ENCODE measurements at regions of chr12 and their contacts with region 1.

Region 1: DNA sequence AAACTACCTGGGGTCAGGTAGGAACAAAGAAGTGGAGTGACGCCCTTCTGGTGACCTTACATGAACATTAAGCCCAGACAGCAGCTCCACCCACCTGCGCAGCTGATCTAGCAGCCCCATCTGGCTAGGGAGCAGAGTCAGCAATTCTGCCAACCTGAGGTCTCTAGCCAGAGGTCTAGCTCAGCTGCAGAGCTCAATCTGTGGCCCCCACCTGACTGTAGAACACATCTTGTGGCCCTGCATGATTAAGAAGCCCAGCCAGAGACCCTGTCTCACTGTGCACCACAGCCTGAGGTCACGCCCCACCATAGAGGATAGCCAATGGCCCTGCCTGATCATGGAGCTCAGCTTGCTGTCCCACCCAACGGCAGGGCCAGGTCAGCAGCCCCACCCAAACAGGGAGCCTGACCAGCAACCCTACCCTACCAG is 50.6 kb upstream of the HIGD1C start:
- DNase-seq: peak; percentile 45
- H3K4me3 Mint-ChIP-seq: no peak overlapping the region
- H3K27ac Mint-ChIP-seq: no peak overlapping the region
- H3K4me1 Mint-ChIP-seq: no peaks in the 10 kb centered on the region
- H3K27me3 Mint-ChIP-seq: peaks cover 2% of the 10 kb centered on the region

Region 2: DNA sequence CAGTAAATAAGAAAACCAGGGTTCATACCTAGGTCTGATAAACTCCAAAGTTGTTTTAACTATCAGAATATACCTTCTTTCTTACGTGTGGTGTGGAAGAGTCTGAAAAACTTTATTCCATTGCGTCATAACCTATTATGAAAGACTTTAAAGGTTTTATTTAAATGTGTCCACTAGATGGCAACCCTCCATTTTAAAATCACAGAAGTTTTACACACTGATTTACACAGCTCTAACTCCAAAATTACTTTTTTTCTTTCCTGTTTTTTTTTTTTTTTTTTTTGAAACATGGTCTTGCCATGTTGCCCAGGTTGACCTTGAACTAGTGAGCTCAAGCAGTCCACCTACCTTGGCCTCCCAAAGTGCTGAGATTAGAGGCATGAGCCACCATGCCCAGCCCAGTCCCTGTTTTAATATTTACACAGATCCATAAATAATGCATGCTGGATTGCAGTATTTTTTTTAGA is 76.3 kb before region 1 on chr12:
- intact Hi-C with region 1: no loop called
- DNase-seq: no peak
- H3K4me3 Mint-ChIP-seq: no peak overlapping the region
- H3K27ac Mint-ChIP-seq: no peak overlapping the region
- H3K4me1 Mint-ChIP-seq: peaks cover 5% of the 10 kb centered on the region
- H3K27me3 Mint-ChIP-seq: no peaks in the 10 kb centered on the region

Region 3: DNA sequence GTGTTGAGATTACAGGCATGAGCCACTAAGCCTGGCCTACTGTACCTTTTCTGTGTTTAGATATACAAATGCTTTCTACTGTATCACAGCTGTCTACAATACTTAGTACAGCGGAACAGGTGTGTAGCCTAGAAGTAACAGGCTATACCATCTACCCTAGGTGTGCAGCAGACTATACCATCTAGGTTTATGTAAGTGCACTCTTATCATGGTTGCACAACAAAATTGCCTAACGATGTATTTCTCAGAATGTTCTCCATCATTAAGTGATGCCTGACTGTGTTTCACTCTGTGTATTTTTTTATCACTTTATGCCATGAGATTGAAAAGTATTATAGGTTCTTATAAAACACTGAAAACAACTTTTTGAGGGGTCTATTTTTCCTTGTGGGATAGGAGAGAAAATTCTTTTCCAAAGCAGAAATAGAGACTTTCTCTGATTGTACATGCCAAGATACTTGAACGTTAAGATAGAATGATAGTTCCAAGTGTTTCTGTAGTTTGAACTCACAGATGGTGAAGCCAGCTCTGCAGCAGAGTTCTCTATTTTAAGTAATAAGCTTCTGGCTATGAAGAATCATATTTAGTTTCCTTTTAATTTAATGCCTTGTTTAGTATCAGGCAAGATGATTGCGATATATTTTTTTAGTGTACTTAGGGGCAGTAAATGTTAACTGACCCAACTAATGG is 41.9 kb before region 1 on chr12:
- intact Hi-C with region 1: loop called (anchors 10 kb)
- DNase-seq: no peak
- H3K4me3 Mint-ChIP-seq: no peak overlapping the region
- H3K27ac Mint-ChIP-seq: no peak overlapping the region
- H3K4me1 Mint-ChIP-seq: peaks cover 2% of the 10 kb centered on the region
- H3K27me3 Mint-ChIP-seq: peaks cover 2% of the 10 kb centered on the region